Stomach (tissue), 19 donors: ENCODE measurements at regions of chr14 and their contacts with region 1.

Region 1: GRCh38 chr14:55094321-55095157 is 34.5 kb upstream of the LGALS3 start:
- DNase-seq: no peak
- H3K4me3 ChIP-seq: no peak overlapping the region
- H3K27ac ChIP-seq: no peak overlapping the region
- H3K4me1 ChIP-seq: peaks cover 0 to 27% (median 12%) of the 10 kb centered on the region in 4 donors
- H3K27me3 ChIP-seq: no peaks in the 10 kb centered on the region
- CTCF ChIP-seq: no peak
- EP300 ChIP-seq: no peak
- POLR2A ChIP-seq: no peak

Region 2: GRCh38 chr14:54312140-54312801 is 782.3 kb before region 1 on chr14:
- intact Hi-C with region 1: no loop called
- DNase-seq: no peak
- H3K4me3 ChIP-seq: no peak overlapping the region
- H3K27ac ChIP-seq: no peak overlapping the region
- H3K4me1 ChIP-seq: peaks cover 0 to 9% (median 0%) of the 10 kb centered on the region in 4 donors
- H3K27me3 ChIP-seq: no peaks in the 10 kb centered on the region
- CTCF ChIP-seq: no peak
- EP300 ChIP-seq: no peak
- POLR2A ChIP-seq: no peak

Region 3: DNA sequence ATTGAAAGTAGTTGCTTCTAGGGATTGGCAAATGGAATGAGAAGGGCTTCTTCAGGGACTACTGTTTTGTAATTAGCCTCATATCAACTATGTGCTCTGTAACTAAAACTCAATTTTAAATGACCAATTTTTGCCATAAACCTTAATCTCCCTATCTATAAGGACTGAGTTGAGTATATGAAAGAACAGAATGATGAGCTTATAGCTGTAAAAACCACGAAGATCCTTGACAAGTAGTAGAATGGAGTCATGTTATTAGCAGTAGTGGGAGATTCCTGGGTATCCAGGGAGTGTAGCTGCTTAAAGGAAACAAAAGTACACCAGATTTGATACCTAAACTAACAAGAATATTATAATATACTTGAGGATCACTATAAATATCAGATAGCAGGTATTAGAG is 62.5 kb after region 1 on chr14:
- intact Hi-C with region 1: loop called (anchors 5 kb)
- DNase-seq: no peak
- H3K4me3 ChIP-seq: no peak overlapping the region
- H3K27ac ChIP-seq: no peak overlapping the region
- H3K4me1 ChIP-seq: no peaks in the 10 kb centered on the region
- H3K27me3 ChIP-seq: no peaks in the 10 kb centered on the region
- CTCF ChIP-seq: no peak
- EP300 ChIP-seq: no peak
- POLR2A ChIP-seq: no peak